GM12878 (cell line): ENCODE measurements at regions of chr5 and their contacts with region 1.

Region 1: DNA sequence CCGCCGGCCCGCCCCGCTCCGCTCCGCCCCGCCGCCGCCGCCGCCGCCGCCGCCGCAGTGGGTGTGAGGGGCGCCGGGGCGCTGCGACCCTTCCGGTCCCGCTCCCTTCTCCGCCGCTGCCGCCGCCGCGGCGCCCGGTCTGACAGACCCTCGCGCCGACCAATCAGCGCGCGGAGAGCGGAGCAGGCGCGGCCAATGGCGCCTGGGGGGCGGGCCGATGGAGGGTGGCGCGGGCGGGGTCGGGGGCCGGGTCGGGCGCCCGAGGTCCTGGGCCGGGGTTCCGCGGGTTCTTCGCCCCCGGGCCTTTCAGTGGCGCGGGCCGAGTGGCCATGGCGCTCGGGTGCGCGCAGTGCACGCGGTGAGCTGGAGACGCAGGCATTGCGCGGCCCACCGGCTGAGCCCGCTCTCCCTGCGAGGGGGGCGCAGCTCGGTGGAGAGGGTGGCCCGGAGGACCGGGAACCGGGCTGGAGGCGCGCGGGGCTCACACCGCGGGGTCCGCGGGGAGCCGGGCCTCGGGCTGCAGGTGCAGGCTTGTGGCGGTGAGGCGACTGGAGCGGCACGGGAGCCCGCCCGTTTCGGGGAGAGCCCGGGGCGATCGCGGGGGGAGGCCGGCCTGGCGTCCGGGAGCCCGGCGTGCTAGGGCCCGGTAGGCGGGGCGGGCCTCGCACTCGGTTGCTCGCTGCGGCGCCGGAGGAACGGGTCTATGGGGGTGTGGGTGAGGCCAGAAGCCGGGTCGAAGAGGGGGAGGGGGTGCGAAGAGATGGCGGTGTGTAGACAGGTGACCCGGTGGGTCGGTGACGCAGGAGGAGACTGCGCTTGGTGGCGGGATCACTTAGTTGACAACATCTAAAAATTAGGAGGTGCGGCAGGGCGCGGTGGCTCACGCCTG is at the start of gene MAPK9:
- DNase-seq: no peak
- ATAC-seq: peak; percentile 86
- H3K4me3 ChIP-seq: peak within 1 kb of the TSS; percentile 90
- H3K27ac ChIP-seq: peak within 1 kb of the TSS; percentile 73
- H3K4me1 ChIP-seq: peaks cover 6% of the 10 kb centered on the region
- H3K27me3 ChIP-seq: no peaks in the 10 kb centered on the region
- CTCF ChIP-seq: no peak
- EP300 ChIP-seq: no peak
- POLR2A ChIP-seq: peak; percentile 80
- RAD21 ChIP-seq: no peak
- polyA plus RNA-seq, gene MAPK9: 4.8 to 6.8 TPM

Region 2: DNA sequence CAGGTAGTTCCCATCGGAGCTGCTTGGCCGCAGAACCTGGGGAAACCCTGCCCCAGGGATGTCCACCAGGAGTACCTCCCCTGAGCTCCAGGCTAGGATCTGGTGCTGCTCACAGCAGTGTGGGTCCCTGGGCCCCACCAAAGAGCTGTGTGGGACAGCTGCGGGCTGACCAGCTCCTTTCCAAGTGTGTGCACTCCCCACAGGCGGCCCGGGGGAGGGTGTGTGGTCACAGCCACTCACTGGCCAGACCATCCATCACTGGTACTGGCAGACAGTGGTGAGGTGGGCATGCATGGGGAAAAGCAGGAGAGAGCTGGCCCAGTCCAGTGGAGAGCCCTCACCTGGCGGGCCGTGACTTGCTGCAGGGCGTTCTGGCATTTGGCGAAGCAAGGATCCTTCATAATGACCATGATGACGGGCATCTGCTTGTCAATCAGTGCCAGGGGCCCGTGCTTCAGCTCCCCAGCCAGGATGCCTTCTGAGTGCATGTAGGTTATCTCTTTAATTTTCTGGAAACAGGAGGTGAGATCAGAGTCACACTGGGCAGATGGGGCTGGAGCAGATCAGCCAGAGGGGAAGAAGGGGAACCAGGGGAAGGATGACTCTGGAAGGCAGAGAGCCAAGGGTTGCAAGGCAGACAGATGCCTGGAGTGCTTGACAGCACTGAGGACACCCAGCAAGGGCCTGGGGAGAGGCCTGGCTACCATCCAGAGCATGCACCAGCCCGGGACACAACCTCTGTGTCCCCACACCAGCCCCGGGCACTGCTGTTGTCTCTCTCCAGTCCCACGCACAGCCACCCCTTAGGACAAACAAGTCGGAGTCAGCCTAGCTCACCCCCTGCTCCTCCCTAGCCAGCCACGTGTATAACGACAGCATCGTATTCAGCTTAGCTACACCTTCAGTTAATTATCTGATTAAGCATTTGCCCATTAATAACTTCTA is 12.5 kb after region 1 on chr5:
- CTCF ChIA-PET with region 1: interaction called, 40 read pairs
- POLR2A ChIA-PET with region 1: no interaction called
- RAD21 ChIA-PET with region 1: interaction called, 4 read pairs
- SMC1A ChIA-PET with region 1: no interaction called
- in situ Hi-C with region 1: no loop called
- intact Hi-C with region 1: no loop called
- DNase-seq: no peak
- ATAC-seq: no peak
- H3K4me3 ChIP-seq: no peak overlapping the region
- H3K27ac ChIP-seq: no peak overlapping the region
- H3K4me1 ChIP-seq: no peaks in the 10 kb centered on the region
- H3K27me3 ChIP-seq: peaks cover 0 to 3% of the 10 kb centered on the region in 2 experiments; a peak in 2 of 4 replicates
- CTCF ChIP-seq: no peak
- EP300 ChIP-seq: no peak
- POLR2A ChIP-seq: no peak
- RAD21 ChIP-seq: no peak

Region 3: DNA sequence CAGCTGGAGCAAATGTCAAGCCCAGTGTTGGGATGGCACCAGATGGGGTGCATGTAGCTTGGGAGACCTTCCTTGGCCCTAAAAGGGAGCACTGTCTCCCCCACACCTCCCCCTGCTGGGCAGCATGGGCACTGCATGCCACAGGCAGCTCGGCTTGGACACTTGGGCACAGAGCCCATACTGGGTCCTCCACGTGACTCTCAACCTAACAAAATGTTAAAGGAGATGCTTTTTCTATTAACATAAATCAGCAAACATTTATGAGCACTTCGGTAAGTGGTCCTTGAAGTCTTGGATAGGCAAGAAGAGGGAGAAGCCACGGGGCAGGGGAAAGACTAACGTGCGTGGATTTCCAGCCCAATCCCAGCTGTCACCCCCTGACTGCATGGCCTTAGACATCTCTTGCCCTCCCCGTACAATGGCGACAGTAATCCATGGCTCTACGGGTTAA is 23.6 kb after region 1 on chr5:
- CTCF ChIA-PET with region 1: interaction called, 139 read pairs
- POLR2A ChIA-PET with region 1: interaction called, 3 read pairs
- RAD21 ChIA-PET with region 1: interaction called, 33 read pairs
- SMC1A ChIA-PET with region 1: interaction called, 28 read pairs
- in situ Hi-C with region 1: no loop called
- intact Hi-C with region 1: loop called (anchors 1 kb)
- DNase-seq: no peak
- ATAC-seq: peak; percentile 97
- H3K4me3 ChIP-seq: no peak overlapping the region
- H3K27ac ChIP-seq: no peak overlapping the region
- H3K4me1 ChIP-seq: no peaks in the 10 kb centered on the region
- H3K27me3 ChIP-seq: no peaks in the 10 kb centered on the region; a peak in 1 of 4 replicates
- CTCF ChIP-seq: peak; percentile 86 to 99 (median 97)
- EP300 ChIP-seq: no peak
- POLR2A ChIP-seq: no peak
- RAD21 ChIP-seq: peak; percentile 67

Region 4: GRCh38 chr5:180328296-180329137 is 36.3 kb after region 1 on chr5:
- CTCF ChIA-PET with region 1: interaction called, 44 read pairs
- POLR2A ChIA-PET with region 1: no interaction called
- RAD21 ChIA-PET with region 1: interaction called, 16 read pairs
- SMC1A ChIA-PET with region 1: interaction called, 11 read pairs
- in situ Hi-C with region 1: no loop called
- intact Hi-C with region 1: loop called (anchors 1 kb)
- DNase-seq: peak; percentile 17
- ATAC-seq: peak; percentile 99
- H3K4me3 ChIP-seq: no peak overlapping the region
- H3K27ac ChIP-seq: no peak overlapping the region
- H3K4me1 ChIP-seq: no peaks in the 10 kb centered on the region
- H3K27me3 ChIP-seq: no peaks in the 10 kb centered on the region
- CTCF ChIP-seq: peak; percentile 77 to 89 (median 78)
- EP300 ChIP-seq: no peak
- POLR2A ChIP-seq: no peak
- RAD21 ChIP-seq: peak; percentile 58

Region 5: GRCh38 chr5:180424094-180424493 is 131.9 kb after region 1 on chr5:
- CTCF ChIA-PET with region 1: no interaction called
- POLR2A ChIA-PET with region 1: no interaction called
- RAD21 ChIA-PET with region 1: no interaction called
- SMC1A ChIA-PET with region 1: no interaction called
- in situ Hi-C with region 1: no loop called
- intact Hi-C with region 1: no loop called
- DNase-seq: no peak
- ATAC-seq: no peak
- H3K4me3 ChIP-seq: no peak overlapping the region
- H3K27ac ChIP-seq: no peak overlapping the region
- H3K4me1 ChIP-seq: no peaks in the 10 kb centered on the region
- H3K27me3 ChIP-seq: no peaks in the 10 kb centered on the region
- CTCF ChIP-seq: no peak
- EP300 ChIP-seq: no peak
- POLR2A ChIP-seq: no peak
- RAD21 ChIP-seq: no peak

Region 6: DNA sequence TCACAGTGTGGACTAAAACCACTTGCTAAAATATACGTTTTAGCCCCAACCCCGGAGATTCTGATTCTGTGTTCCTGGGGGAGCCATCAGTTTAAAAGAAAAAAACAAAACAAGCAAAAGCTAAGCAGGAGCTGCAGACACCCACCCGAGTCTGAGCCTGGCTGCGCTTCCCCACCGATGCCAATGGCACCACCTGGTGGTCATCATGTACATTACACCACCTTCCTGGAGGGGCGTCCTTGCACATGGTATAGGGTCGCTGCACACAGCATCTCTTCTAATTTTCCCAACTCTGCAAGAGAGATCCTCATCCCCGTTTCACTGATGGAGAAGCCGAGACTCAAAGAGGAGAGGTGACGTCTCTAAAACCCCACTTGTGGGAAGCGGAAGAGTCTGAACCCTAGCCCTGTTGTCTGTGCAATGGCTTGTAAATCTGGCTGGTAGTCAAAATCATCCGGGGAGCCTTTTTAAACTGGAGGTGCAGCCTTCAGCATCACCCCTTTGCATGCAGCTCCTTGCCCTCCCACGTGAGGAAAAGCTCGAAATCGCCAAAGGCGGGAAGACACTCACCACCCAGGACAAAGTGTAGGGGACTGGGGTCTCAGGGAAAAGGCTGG is 178.9 kb after region 1 on chr5:
- CTCF ChIA-PET with region 1: interaction called, 14 read pairs
- POLR2A ChIA-PET with region 1: no interaction called
- RAD21 ChIA-PET with region 1: interaction called, 5 read pairs
- SMC1A ChIA-PET with region 1: no interaction called
- in situ Hi-C with region 1: loop called (anchors 5 kb)
- intact Hi-C with region 1: loop called (anchors 1 kb)
- DNase-seq: no peak
- ATAC-seq: peak; percentile 91
- H3K4me3 ChIP-seq: no peak overlapping the region
- H3K27ac ChIP-seq: no peak overlapping the region
- H3K4me1 ChIP-seq: no peaks in the 10 kb centered on the region
- H3K27me3 ChIP-seq: no peaks in the 10 kb centered on the region
- CTCF ChIP-seq: peak; percentile 85 to 88 (median 87)
- EP300 ChIP-seq: no peak
- POLR2A ChIP-seq: no peak
- RAD21 ChIP-seq: peak; percentile 72

Region 7: DNA sequence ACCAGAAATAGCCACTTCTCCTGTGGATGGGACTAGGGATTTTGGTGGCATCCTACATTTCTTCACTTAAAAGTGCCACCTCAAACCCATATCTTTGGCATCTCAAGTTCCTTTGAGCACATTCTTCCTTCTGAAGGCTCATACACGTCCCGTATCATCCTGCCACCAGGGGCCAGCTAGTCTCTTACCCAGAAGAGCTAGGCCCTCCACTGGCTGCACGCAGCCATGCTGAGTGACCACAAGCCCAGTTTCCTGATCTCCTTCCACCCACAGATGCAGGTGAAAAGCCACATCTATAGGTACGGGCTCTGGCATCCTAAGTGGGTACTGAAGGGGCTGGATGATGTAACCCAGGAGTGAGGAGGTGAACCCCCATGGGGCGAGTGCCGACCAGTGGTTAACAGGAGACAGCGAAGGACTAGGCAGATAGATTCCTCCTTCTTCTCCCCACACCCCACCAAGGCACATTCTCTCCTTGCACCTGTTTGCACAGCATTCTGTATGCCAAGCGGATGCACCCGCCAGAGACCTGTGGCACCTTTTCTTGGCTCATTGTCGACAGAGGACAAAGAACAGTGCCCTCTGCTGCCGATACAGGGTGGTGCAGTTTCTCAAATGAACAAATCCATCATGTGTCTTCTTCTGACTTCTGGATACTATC is 313.5 kb after region 1 on chr5:
- CTCF ChIA-PET with region 1: interaction called, 5 read pairs
- POLR2A ChIA-PET with region 1: no interaction called
- RAD21 ChIA-PET with region 1: interaction called, 3 read pairs
- SMC1A ChIA-PET with region 1: no interaction called
- in situ Hi-C with region 1: no loop called
- intact Hi-C with region 1: loop called (anchors 2 kb)
- DNase-seq: peak; percentile 17
- ATAC-seq: peak; percentile 84
- H3K4me3 ChIP-seq: no peak overlapping the region
- H3K27ac ChIP-seq: no peak overlapping the region
- H3K4me1 ChIP-seq: no peaks in the 10 kb centered on the region
- H3K27me3 ChIP-seq: no peaks in the 10 kb centered on the region
- CTCF ChIP-seq: peak; percentile 79 to 86 (median 83)
- EP300 ChIP-seq: no peak
- POLR2A ChIP-seq: no peak
- RAD21 ChIP-seq: peak; percentile 61